Activated CD4-positive, alpha-beta T cell treated with anti-CD3 and anti-CD28 coated beads, Interleukin-2, amount 10 ng/mL, durations not matched to agents 24 days and 14 days (primary cell): ENCODE measurements at regions of chr11 and their contacts with region 1.

Region 1: DNA sequence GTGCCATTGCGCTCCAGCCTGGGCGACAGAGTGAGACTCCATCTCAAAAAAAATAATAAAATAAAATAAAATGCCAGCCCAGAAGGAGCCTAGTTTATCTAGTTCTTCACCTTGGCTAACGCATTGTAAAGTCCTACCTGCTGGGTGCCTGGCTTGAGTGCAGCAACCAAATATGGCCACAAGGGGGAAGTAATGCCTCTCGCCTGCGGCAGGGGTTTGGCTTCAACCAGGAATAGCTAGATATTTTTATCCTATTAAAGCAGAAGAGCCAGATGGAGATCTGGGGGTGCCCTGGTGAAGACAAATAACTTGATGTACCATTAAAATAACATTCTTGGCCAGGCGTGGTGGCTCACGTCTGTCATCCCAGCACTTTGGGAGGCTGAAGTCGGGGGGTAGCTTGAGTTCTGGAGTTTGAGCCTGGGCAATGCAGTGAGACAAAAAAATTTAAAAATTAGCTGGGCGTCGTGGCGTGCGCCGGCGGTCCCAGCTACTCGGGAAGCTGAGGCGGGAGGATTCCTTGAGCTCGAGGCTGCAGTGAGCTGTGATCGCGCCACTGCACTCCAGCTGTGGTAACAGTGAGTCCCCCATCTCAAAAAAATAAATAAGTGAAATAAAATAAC is 20.6 kb upstream of the PLEKHB1 start:
- DNase-seq: peak; percentile 89
- H3K4me3 Mint-ChIP-seq: no peak overlapping the region
- H3K27ac Mint-ChIP-seq: no peak overlapping the region
- H3K4me1 Mint-ChIP-seq: peaks cover 2% of the 10 kb centered on the region
- H3K27me3 Mint-ChIP-seq: peaks cover 32% of the 10 kb centered on the region

Region 2: GRCh38 chr11:73661035-73661628 is 35.3 kb after region 1 on chr11:
- intact Hi-C with region 1: loop called (anchors 1 kb)
- DNase-seq: peak; percentile 95
- H3K4me3 Mint-ChIP-seq: peak overlapping the region; percentile 50
- H3K27ac Mint-ChIP-seq: no peak overlapping the region
- H3K4me1 Mint-ChIP-seq: peaks cover 7% of the 10 kb centered on the region
- H3K27me3 Mint-ChIP-seq: no peaks in the 10 kb centered on the region

Region 3: GRCh38 chr11:73833067-73833466 is 207.3 kb after region 1 on chr11:
- intact Hi-C with region 1: no loop called
- DNase-seq: no peak
- H3K4me3 Mint-ChIP-seq: no peak overlapping the region
- H3K27ac Mint-ChIP-seq: no peak overlapping the region
- H3K4me1 Mint-ChIP-seq: peaks cover under 1% of the 10 kb centered on the region
- H3K27me3 Mint-ChIP-seq: no peaks in the 10 kb centered on the region

Region 4: DNA sequence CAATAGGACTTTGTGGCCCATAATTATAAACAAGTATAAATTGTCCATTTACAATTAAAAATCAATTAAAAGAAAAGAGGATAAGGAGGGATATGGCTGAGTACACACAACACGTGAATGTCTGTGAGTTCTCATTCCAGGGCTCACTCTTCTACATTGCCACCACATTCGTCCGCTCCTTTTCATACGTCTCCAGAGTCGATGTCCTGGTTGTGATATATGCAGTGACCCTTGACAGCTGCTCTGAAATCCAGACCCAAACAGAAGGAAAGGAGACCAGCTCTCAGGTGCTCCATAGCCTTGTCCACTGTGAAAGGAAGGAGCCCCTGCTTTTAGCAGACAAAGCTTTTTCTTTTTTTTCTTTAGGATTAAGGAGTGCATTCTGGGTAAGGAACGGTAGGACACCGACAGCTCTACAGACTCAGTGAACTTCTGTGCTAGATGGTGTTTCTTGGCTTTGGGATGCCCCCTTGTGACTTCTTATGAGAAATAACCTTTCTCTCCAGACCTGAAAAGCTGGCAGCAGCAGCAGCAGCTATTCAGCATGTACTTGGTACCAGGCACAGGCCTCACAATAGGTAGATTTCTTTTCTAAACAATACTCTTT is 305.3 kb after region 1 on chr11:
- intact Hi-C with region 1: loop called (anchors 5 kb)
- DNase-seq: peak; percentile 72
- H3K4me3 Mint-ChIP-seq: no peak overlapping the region
- H3K27ac Mint-ChIP-seq: no peak overlapping the region
- H3K4me1 Mint-ChIP-seq: no peaks in the 10 kb centered on the region
- H3K27me3 Mint-ChIP-seq: no peaks in the 10 kb centered on the region